PC-3 (cell line): ENCODE measurements at regions of chr3 and their contacts with region 1.

Region 1: GRCh38 chr3:48268381-48269183 is 27.7 kb downstream of the ZNF589 start:
- DNase-seq: peak; percentile 97
- ATAC-seq: peak; percentile 98
- H3K4me3 ChIP-seq: peak overlapping the region; percentile 47
- H3K27ac ChIP-seq: peak overlapping the region; percentile 93
- H3K4me1 ChIP-seq: peaks cover 28% of the 10 kb centered on the region
- H3K27me3 ChIP-seq: no peaks in the 10 kb centered on the region
- CTCF ChIP-seq: no peak

Region 2: DNA sequence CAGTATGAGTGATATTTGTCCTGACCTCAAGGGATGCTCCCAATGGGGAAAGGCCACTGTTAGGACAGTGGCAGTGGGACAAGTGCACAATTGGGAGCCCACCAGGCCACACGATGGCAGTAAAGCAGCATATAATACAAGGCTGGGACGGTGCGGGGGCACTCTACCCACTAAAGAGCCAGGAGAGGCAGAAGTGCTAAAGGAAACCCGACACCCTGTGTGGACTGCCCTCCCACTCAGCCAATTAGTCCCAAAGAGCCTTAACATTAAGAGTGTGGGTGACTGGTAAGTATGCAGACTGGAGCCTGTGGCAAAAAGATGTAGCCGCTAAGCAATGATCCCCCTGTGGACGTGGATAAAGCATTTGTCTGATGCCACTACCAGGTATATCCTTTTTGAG is 35.8 kb before region 1 on chr3:
- CTCF ChIA-PET with region 1: no interaction called
- POLR2A ChIA-PET with region 1: interaction called, 3 read pairs
- intact Hi-C with region 1: loop called (anchors 2 kb)
- DNase-seq: peak; percentile 84
- ATAC-seq: peak; percentile 100
- H3K4me3 ChIP-seq: peak overlapping the region; percentile 36; the same call in 1 of the 2 replicates
- H3K27ac ChIP-seq: no peak overlapping the region
- H3K4me1 ChIP-seq: peaks cover 4% of the 10 kb centered on the region; the same call in 1 of the 2 replicates
- H3K27me3 ChIP-seq: no peaks in the 10 kb centered on the region
- CTCF ChIP-seq: peak; percentile 93

Region 3: GRCh38 chr3:48514436-48515227 is 246.1 kb after region 1 on chr3:
- CTCF ChIA-PET with region 1: no interaction called
- POLR2A ChIA-PET with region 1: no interaction called
- intact Hi-C with region 1: no loop called
- DNase-seq: no peak
- ATAC-seq: no peak
- H3K4me3 ChIP-seq: no peak overlapping the region
- H3K27ac ChIP-seq: no peak overlapping the region
- H3K4me1 ChIP-seq: no peaks in the 10 kb centered on the region
- H3K27me3 ChIP-seq: no peaks in the 10 kb centered on the region
- CTCF ChIP-seq: no peak